Esophagus muscularis mucosa (tissue), 4 donors: ENCODE measurements at regions of chr9 and their contacts with region 1.

Region 1: GRCh38 chr9:82829818-82830217 is 233.1 kb downstream of the RASEF start:
- DNase-seq: no peak
- H3K4me3 ChIP-seq: no peak overlapping the region
- H3K27ac ChIP-seq: no peak overlapping the region
- H3K4me1 ChIP-seq: no peaks in the 10 kb centered on the region
- H3K27me3 ChIP-seq: no peaks in the 10 kb centered on the region
- CTCF ChIP-seq: no peak
- EP300 ChIP-seq: no peak
- POLR2A ChIP-seq: no peak

Region 2: DNA sequence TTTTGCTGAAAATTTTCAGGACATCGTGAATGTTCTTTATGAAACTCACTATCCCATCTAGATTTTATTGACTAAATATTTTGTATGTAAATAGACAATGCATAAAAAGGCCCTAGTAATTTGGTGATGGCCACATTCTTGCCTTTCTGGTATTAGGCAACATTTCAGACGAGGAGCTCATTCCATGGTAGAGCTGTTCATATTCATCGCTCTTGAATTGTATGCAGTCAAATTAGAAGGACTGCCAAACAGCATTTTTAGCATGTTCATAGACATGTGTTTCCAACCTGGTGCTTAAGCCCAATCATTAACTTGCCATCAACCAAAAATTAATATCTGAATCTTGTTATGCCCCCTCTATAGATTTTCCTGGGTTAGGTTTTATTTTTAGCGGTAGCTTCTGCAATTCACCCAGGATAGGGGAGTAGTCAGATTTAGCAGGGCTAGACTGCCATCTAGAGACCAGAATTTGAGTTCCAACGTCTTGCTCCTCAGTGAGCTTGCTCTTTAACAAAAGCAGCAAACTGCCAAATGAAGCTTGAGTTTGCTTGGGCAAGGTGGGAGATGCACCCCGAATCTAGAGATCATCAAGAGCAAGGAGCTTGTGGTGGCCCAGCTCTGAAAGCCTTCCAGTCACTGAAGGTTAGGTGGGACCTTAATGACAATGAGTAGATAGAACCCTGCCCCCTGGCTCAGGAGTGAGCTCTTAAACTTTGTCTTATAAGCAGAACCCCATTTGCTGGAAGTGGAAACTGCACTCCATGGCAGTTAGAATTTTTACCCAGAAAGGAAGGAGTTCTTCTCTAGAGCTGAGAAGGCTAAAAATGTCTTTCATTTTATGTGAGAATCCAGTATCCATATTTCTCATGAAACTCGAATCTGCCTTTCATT is 223.1 kb before region 1 on chr9:
- intact Hi-C with region 1: no loop called
- DNase-seq: no peak
- H3K4me3 ChIP-seq: no peak overlapping the region
- H3K27ac ChIP-seq: no peak overlapping the region
- H3K4me1 ChIP-seq: peaks cover 3 to 23% (median 19%) of the 10 kb centered on the region in 4 donors
- H3K27me3 ChIP-seq: no peaks in the 10 kb centered on the region
- CTCF ChIP-seq: peak; percentile 59 to 67 (median 60)
- EP300 ChIP-seq: no peak
- POLR2A ChIP-seq: no peak

Region 3: GRCh38 chr9:82877607-82878006 is 47.8 kb after region 1 on chr9:
- intact Hi-C with region 1: loop called (anchors 10 kb)
- DNase-seq: no peak
- H3K4me3 ChIP-seq: no peak overlapping the region
- H3K27ac ChIP-seq: no peak overlapping the region
- H3K4me1 ChIP-seq: no peaks in the 10 kb centered on the region
- H3K27me3 ChIP-seq: no peaks in the 10 kb centered on the region
- CTCF ChIP-seq: no peak
- EP300 ChIP-seq: no peak
- POLR2A ChIP-seq: no peak